Activated naive CD4-positive, alpha-beta T cell treated with anti-CD3 and anti-CD28 coated beads for 36 hours (primary cell): ENCODE measurements at regions of chr2 and their contacts with region 1.

Region 1: GRCh38 chr2:121736462-121737341 is at the start of gene NIFK:
- DNase-seq: peak; percentile 100
- H3K4me3 Mint-ChIP-seq: peak within 1 kb of the TSS; percentile 90
- H3K27ac Mint-ChIP-seq: peak within 1 kb of the TSS; percentile 93
- H3K4me1 Mint-ChIP-seq: peaks cover 41% of the 10 kb centered on the region
- H3K27me3 Mint-ChIP-seq: no peaks in the 10 kb centered on the region
- total RNA-seq, gene NIFK: 112 to 117 TPM

Region 2: DNA sequence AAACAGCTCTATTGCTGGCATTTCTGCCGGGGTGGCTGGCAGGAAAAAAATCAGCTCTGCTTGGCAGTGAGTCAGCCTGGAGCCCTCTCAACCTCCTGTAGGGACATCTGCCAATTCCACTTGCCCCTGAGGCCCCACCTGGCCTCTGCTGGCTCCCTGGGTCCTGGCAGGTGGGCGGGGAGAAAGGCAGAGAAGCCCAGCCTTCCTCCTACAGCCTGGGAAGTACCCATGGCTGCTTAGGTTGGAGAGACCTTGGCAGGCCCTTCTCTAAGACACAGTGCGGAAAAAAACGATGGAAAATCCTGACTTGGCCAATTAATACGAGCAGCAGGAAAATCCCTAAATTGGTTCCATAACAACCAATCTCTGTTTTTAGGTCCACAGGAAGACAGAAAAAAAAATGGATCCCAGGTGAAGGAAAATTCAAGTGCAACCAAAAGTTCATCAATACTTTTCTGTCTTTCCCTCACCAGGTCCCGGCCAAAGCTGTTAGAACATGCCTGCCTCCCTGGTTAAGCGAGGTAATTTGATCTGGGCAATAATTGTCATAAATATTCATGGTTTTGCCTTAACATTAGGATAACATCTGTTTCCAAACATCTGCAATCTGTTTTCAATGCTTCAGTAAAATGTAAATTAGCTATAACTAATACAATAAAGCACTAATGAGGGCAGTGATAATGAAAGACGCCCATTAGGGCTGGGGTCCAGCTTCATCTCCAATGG is 697.6 kb before region 1 on chr2:
- CTCF ChIA-PET with region 1: no interaction called
- intact Hi-C with region 1: no loop called
- DNase-seq: no peak
- H3K4me3 Mint-ChIP-seq: no peak overlapping the region
- H3K27ac Mint-ChIP-seq: no peak overlapping the region
- H3K4me1 Mint-ChIP-seq: no peaks in the 10 kb centered on the region
- H3K27me3 Mint-ChIP-seq: no peaks in the 10 kb centered on the region

Region 3: DNA sequence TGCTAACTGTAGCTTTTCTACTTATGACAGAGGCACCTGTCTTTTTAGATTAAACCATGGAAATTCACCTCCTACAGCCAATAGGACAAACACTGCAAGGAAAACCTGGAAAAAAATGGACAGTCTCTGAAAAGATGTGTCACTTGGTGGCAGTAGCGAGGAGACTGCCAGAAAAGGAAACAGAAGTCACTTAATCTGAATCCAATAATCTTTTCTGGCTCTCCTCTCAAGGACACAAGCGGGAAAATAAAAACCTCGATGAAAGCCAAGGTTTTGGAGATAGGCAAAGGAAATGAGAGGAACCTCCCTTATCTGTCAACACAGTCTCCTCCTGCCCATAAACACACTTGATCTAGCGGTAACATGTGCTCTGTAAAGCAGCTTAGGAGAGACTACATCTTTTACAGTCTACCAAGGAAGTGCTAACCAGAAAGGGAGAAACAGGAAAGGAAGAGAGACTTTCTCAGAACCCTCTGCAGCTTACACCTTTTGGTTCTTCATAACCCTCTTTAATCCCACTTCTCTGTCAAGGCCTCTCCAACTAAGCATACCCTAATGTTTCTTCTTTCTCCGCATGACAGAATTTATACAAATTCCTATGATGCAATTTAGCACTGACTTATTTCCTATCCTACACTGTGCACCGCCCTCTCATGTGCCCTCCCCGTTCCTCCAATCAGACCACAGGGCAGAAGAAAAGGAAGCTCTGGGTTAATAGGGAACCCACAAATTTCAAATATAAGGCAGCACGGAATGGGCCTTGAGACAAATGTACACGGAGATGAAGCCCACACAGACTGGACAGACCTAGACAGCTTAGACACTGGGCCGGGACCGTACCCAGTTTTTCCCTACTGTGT is 140.3 kb before region 1 on chr2:
- CTCF ChIA-PET with region 1: interaction called, 3 read pairs
- intact Hi-C with region 1: loop called (anchors 1 kb)
- DNase-seq: peak; percentile 61
- H3K4me3 Mint-ChIP-seq: peak overlapping the region; percentile 82
- H3K27ac Mint-ChIP-seq: peak overlapping the region; percentile 87
- H3K4me1 Mint-ChIP-seq: peaks cover 49% of the 10 kb centered on the region
- H3K27me3 Mint-ChIP-seq: no peaks in the 10 kb centered on the region

Region 4: GRCh38 chr2:121689356-121689755 is 47.3 kb before region 1 on chr2:
- CTCF ChIA-PET with region 1: no interaction called
- intact Hi-C with region 1: no loop called
- DNase-seq: no peak
- H3K4me3 Mint-ChIP-seq: no peak overlapping the region
- H3K27ac Mint-ChIP-seq: no peak overlapping the region
- H3K4me1 Mint-ChIP-seq: no peaks in the 10 kb centered on the region
- H3K27me3 Mint-ChIP-seq: no peaks in the 10 kb centered on the region

Region 5: DNA sequence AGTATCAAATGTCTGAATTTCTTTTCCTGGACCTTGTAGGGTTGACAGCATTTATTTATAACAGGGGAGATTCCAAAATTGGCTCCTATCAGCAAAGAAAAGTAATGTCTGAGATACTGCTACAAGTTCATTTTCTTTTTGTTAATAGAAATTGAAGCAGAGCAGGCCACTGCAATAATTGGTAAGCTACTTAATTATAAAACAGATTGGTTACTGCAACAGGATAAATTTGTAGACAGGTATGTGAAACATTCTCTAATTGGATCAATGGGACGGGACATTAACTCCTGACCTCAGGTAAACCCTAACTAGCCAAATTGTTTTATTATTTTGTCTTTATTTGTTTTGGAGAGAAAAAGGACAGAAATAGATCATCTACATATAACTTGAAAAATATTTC is 20.6 kb before region 1 on chr2:
- CTCF ChIA-PET with region 1: no interaction called
- intact Hi-C with region 1: no loop called
- DNase-seq: no peak
- H3K4me3 Mint-ChIP-seq: no peak overlapping the region
- H3K27ac Mint-ChIP-seq: no peak overlapping the region
- H3K4me1 Mint-ChIP-seq: peaks cover 4% of the 10 kb centered on the region
- H3K27me3 Mint-ChIP-seq: no peaks in the 10 kb centered on the region

Region 6: DNA sequence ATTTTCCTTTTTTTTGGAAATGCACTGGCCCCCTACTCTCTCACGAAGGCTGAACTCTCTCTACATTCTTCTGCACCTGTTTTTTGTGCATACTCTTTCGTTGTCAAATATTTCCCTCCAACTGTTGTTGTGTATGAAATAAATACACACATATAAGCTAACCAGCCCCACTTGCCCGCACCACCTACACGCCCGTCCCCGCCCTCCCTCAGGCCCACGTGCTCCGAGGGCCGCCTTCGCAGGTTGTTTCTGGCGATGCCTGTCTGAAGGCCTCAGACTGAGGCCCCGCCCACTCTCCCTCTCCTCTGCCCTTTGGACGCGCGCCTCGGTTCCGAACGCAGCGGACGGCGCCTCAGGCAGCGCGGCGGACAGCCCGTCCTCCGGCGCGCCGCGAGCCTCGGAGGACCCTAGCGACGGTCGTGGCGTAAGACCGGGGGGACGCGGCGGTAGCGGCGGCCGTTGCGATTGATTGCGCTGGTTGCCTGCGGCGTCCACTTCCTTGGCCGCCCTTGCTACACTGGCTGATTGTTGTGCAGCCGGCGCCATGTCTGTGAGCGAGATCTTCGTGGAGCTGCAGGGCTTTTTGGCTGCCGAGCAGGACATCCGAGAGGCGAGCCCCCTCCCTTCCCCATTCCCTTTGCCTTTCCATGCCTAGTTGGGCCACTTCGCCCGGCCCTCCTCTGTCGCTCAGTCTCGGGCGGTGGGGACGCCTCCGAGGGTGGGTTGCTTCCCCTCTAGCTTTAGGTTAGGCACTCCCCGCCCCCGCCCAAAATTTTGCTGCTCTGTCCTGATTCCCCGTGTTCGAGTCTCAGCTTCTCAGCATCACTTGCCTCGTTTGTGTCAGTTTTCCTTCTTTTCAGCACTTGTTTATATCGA is 18.8 kb after region 1 on chr2 and contains the start of gene TSN:
- CTCF ChIA-PET with region 1: interaction called, 4 read pairs
- intact Hi-C with region 1: loop called (anchors 1 kb)
- DNase-seq: peak; percentile 98
- H3K4me3 Mint-ChIP-seq: peak within 1 kb of the TSS; percentile 91
- H3K27ac Mint-ChIP-seq: peak within 1 kb of the TSS; percentile 80
- H3K4me1 Mint-ChIP-seq: peaks cover 32% of the 10 kb centered on the region
- H3K27me3 Mint-ChIP-seq: no peaks in the 10 kb centered on the region
- total RNA-seq, gene TSN: 49.8 to 52.6 TPM

Region 7: GRCh38 chr2:122100346-122100745 is 363.6 kb after region 1 on chr2:
- CTCF ChIA-PET with region 1: no interaction called
- intact Hi-C with region 1: no loop called
- DNase-seq: no peak
- H3K4me3 Mint-ChIP-seq: no peak overlapping the region
- H3K27ac Mint-ChIP-seq: no peak overlapping the region
- H3K4me1 Mint-ChIP-seq: no peaks in the 10 kb centered on the region
- H3K27me3 Mint-ChIP-seq: no peaks in the 10 kb centered on the region

Region 8: DNA sequence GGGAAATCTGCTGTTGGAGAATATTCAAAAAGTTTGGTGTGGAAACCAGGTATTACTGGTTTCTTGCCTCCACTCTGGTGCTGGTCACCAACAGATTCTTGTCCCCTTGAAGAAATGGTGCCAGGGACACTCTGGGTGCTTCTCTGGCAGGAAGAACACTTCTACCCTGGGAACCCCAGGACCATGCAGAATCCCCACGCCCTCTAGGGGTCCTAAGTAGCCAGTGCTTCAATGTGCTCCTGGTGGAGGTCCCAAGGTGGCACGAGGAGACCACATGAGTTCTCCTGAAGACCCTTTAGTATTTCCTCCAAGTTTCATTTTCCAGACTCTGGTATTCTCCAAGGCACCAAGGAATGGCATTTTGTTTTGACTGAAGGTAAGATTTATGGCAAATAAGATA is 399.4 kb after region 1 on chr2:
- CTCF ChIA-PET with region 1: no interaction called
- intact Hi-C with region 1: loop called (anchors 10 kb)
- DNase-seq: peak; percentile 37
- H3K4me3 Mint-ChIP-seq: no peak overlapping the region
- H3K27ac Mint-ChIP-seq: no peak overlapping the region
- H3K4me1 Mint-ChIP-seq: no peaks in the 10 kb centered on the region
- H3K27me3 Mint-ChIP-seq: peaks cover 4% of the 10 kb centered on the region